Ascending aorta (tissue), 2 donors: ENCODE measurements at regions of chr2 and their contacts with region 1.

Region 1: GRCh38 chr2:20642055-20642971 is 8.6 kb downstream of the HS1BP3 start:
- DNase-seq: peak in 1 of 2 donors; percentile 93
- H3K4me3 ChIP-seq: peak overlapping the region in 1 of 2 donors; percentile 37
- H3K27ac ChIP-seq: peak overlapping the region; percentile 95 to 99
- H3K4me1 ChIP-seq: peaks cover 21 to 49% of the 10 kb centered on the region in 2 donors
- H3K27me3 ChIP-seq: no peaks in the 10 kb centered on the region
- CTCF ChIP-seq: peak; percentile 95 to 99 (median 96)

Region 2: DNA sequence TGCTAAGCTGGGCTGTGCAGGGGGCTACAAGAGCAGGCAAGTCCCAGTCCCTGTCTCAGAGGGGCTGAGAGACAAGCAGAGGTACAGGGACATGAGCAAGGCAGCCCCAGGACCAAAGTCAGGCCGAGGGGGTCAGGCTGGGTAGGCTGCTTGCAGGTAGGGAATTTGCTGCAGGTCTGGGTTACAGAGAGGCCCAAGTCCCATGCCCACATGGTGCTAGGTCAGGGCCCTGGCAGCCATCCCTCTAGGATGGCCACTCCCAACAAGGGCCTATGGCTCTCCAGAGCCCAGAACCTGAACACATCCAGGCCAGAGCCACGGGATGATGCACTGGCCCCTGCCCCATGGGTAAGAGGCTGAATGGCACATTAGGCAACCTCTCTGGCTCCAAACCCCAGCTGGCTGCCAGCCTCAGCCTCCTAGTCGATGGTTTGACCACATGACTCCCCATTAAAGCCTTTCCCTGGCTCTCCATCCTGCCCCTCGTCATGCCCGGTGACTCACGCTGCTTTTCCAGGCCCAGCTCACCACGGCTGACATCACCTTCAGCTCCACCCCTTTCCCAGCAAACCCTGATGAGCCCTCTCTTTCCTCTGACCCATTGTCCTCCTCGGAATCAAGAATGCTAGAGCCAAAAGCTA is 501.1 kb before region 1 on chr2:
- intact Hi-C with region 1: loop called (anchors 5 kb)
- DNase-seq: peak; percentile 85 to 92
- H3K4me3 ChIP-seq: no peak overlapping the region
- H3K27ac ChIP-seq: peak overlapping the region; percentile 69 to 76
- H3K4me1 ChIP-seq: peaks cover 3 to 5% of the 10 kb centered on the region in 2 donors
- H3K27me3 ChIP-seq: no peaks in the 10 kb centered on the region
- CTCF ChIP-seq: no peak

Region 3: GRCh38 chr2:20378792-20379519 is 263.4 kb before region 1 on chr2:
- intact Hi-C with region 1: loop called (anchors 2 kb)
- DNase-seq: peak; percentile 44 to 92
- H3K4me3 ChIP-seq: no peak overlapping the region
- H3K27ac ChIP-seq: peak overlapping the region; percentile 4 to 54
- H3K4me1 ChIP-seq: peaks cover 0 to 6% of the 10 kb centered on the region in 2 donors
- H3K27me3 ChIP-seq: no peaks in the 10 kb centered on the region
- CTCF ChIP-seq: peak; percentile 75 to 93 (median 80)

Region 4: GRCh38 chr2:20396356-20397000 is 245.8 kb before region 1 on chr2:
- intact Hi-C with region 1: loop called (anchors 2 kb)
- DNase-seq: no peak
- H3K4me3 ChIP-seq: no peak overlapping the region
- H3K27ac ChIP-seq: no peak overlapping the region
- H3K4me1 ChIP-seq: no peaks in the 10 kb centered on the region
- H3K27me3 ChIP-seq: no peaks in the 10 kb centered on the region
- CTCF ChIP-seq: no peak

Region 5: GRCh38 chr2:20446917-20447436 is 195.3 kb before region 1 on chr2 and contains the start of gene RHOB:
- intact Hi-C with region 1: loop called (anchors 1 kb)
- DNase-seq: peak; percentile 91 to 99
- H3K4me3 ChIP-seq: peak within 1 kb of the TSS; percentile 80 to 95
- H3K27ac ChIP-seq: peak within 1 kb of the TSS; percentile 90 to 96
- H3K4me1 ChIP-seq: peaks cover 3 to 12% of the 10 kb centered on the region in 2 donors
- H3K27me3 ChIP-seq: no peaks in the 10 kb centered on the region
- CTCF ChIP-seq: no peak
- total RNA-seq, gene RHOB: 3,143 TPM